Colonic mucosa (tissue), 4 donors: ENCODE measurements at regions of chr18 and their contacts with region 1.

Region 1: GRCh38 chr18:3665780-3666525 is 216.0 kb downstream of the TGIF1 start:
- DNase-seq: peak; percentile 91
- H3K4me3 ChIP-seq: no peak overlapping the region
- H3K27ac ChIP-seq: peak overlapping the region; percentile 72
- H3K4me1 ChIP-seq: peaks cover 5% of the 10 kb centered on the region
- H3K27me3 ChIP-seq: no peaks in the 10 kb centered on the region
- CTCF ChIP-seq: peak; percentile 91

Region 2: GRCh38 chr18:3297025-3297984 is 368.6 kb before region 1 on chr18:
- intact Hi-C with region 1: loop called (anchors 5 kb)
- DNase-seq: peak; percentile 97
- H3K4me3 ChIP-seq: peak overlapping the region; percentile 51
- H3K27ac ChIP-seq: no peak overlapping the region
- H3K4me1 ChIP-seq: no peaks in the 10 kb centered on the region
- H3K27me3 ChIP-seq: no peaks in the 10 kb centered on the region
- CTCF ChIP-seq: peak; percentile 49

Region 3: GRCh38 chr18:3447895-3448837 is 217.8 kb before region 1 on chr18:
- intact Hi-C with region 1: loop called (anchors 5 kb)
- DNase-seq: peak; percentile 96
- H3K4me3 ChIP-seq: peak overlapping the region; percentile 68
- H3K27ac ChIP-seq: peak overlapping the region; percentile 100
- H3K4me1 ChIP-seq: peaks cover 8% of the 10 kb centered on the region
- H3K27me3 ChIP-seq: no peaks in the 10 kb centered on the region
- CTCF ChIP-seq: no peak

Region 4: DNA sequence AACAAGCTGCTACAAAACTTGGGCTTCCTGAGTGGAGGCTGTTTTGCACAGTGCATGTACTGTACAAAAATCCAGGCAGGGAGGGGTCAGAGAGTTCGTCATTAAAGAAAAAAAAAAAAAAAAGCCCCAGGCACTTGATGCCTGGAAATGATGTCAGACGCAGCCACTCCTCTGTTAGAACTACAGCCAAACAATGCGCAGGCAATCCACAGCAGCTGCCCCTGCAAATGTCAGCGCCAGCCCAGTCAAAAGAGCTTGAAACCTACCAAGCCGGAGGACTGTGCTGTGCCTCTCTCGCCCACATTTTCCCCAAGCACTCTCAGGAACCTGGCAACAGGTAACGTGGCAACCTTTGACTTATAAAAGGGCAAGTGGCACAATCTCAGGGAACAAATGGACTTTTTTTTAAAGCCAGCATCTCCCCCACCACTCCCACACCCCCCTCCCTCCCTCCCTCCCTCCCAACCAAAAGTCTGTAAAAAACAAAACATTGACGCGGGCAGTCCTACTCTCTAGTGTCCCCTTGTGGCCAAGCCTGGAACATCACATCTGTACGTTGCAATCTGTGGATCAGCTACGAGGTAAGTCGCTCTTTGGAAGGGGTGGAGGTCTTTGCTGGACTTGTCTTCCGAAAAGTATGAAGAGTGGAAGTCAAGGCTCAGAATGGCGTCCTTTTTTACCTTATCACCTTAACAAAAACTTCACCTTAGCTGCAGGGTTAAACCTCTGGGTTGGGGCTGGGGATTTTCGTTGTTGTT is 71.9 kb before region 1 on chr18:
- intact Hi-C with region 1: loop called (anchors 5 kb)
- DNase-seq: peak; percentile 94
- H3K4me3 ChIP-seq: peak overlapping the region; percentile 34
- H3K27ac ChIP-seq: peak overlapping the region; percentile 96
- H3K4me1 ChIP-seq: peaks cover 16% of the 10 kb centered on the region
- H3K27me3 ChIP-seq: no peaks in the 10 kb centered on the region
- CTCF ChIP-seq: peak; percentile 84